A673 (cell line): ENCODE measurements at regions of chr10 and their contacts with region 1.

Region 1: DNA sequence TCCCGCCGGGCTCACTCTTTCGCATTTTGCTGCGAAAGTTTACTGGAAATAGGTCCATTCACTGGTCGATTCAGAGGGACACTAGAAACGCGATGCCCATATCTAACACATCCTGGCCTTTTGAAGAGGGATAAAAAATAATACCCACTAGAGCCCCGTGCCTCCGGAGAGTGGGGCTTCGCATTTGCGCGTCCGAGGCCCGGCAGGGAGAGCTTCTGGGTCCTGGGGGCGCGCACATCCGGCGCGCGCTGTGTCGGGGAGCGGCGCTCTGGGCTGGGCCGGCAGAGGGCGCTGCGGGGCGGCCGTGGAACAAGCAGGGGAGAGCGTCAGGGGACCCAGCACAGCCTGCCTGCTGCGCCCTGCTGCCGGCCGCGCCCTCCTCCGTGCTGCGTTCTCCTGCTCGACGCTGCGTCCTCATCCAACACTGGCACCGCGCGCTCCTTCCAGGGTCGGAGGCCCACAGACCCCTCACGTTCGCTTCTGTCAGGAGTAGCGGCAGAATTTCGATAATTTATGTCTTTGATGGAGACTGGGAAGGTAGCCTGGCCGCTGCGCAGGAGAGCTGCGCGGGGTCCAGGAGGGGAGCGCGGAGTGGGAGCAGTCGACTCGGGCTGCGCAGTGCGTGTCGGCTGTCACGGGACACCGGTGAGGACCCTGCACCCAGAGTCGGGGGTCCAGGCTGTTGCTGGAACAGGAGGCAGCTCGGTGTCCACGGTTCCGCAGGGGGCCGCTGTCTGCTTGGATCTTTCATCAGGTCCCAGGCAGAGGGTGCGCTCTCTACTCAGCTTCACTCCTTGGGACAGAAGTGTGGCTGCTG is 41.5 kb upstream of the ZNF32 start:
- DNase-seq: peak; percentile 82
- H3K4me3 ChIP-seq: peak overlapping the region; percentile 47
- H3K27ac ChIP-seq: no peak overlapping the region
- H3K4me1 ChIP-seq: no peaks in the 10 kb centered on the region
- H3K27me3 ChIP-seq: peaks cover 4% of the 10 kb centered on the region
- CTCF ChIP-seq: peak; percentile 84

Region 2: GRCh38 chr10:43958090-43958481 is 267.9 kb after region 1 on chr10:
- CTCF ChIA-PET with region 1: no interaction called
- POLR2A ChIA-PET with region 1: no interaction called
- intact Hi-C with region 1: no loop called
- DNase-seq: no peak
- H3K4me3 ChIP-seq: no peak overlapping the region
- H3K27ac ChIP-seq: no peak overlapping the region
- H3K4me1 ChIP-seq: no peaks in the 10 kb centered on the region
- H3K27me3 ChIP-seq: no peaks in the 10 kb centered on the region
- CTCF ChIP-seq: no peak

Region 3: GRCh38 chr10:44046605-44047004 is 356.4 kb after region 1 on chr10:
- CTCF ChIA-PET with region 1: no interaction called
- POLR2A ChIA-PET with region 1: no interaction called
- intact Hi-C with region 1: loop called (anchors 10 kb)
- DNase-seq: no peak
- H3K4me3 ChIP-seq: no peak overlapping the region
- H3K27ac ChIP-seq: no peak overlapping the region
- H3K4me1 ChIP-seq: no peaks in the 10 kb centered on the region
- H3K27me3 ChIP-seq: no peaks in the 10 kb centered on the region
- CTCF ChIP-seq: no peak

Region 4: GRCh38 chr10:44310762-44311562 is 620.8 kb after region 1 on chr10:
- CTCF ChIA-PET with region 1: no interaction called
- POLR2A ChIA-PET with region 1: no interaction called
- intact Hi-C with region 1: loop called (anchors 5 kb)
- DNase-seq: peak; percentile 47
- H3K4me3 ChIP-seq: no peak overlapping the region
- H3K27ac ChIP-seq: no peak overlapping the region
- H3K4me1 ChIP-seq: no peaks in the 10 kb centered on the region
- H3K27me3 ChIP-seq: no peaks in the 10 kb centered on the region
- CTCF ChIP-seq: peak; percentile 64

Region 5: DNA sequence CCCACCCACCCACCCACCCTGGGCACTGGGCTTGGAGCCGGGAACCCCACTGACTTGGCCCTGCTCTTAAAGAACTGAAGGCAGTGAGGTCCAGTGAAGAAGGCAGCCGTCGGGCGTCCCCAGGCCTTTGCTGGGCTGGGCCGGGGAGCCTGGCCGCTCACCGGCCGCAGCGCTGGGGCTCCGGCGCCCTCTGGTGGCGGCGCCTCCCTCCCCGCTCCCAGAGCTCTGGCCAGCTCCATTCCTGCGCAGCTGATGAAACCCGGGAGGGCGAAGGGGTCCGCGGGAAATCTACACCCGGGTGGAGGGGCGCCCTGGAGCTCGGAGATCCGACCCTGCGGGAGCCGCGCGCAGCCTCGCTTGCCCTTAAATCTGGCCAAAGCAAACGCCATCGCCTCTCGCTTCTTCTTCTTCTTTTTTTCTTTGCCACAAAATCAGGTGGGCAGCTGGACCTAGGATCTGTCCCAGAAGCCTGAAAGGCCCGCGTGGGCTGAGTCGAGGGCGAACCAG is 696.4 kb after region 1 on chr10:
- CTCF ChIA-PET with region 1: interaction called, 5 read pairs
- POLR2A ChIA-PET with region 1: no interaction called
- intact Hi-C with region 1: loop called (anchors 5 kb)
- DNase-seq: peak; percentile 49
- H3K4me3 ChIP-seq: no peak overlapping the region
- H3K27ac ChIP-seq: no peak overlapping the region
- H3K4me1 ChIP-seq: no peaks in the 10 kb centered on the region
- H3K27me3 ChIP-seq: peaks cover 27% of the 10 kb centered on the region
- CTCF ChIP-seq: peak; percentile 80